Ascending aorta (tissue), 2 donors: ENCODE measurements at regions of chr2 and their contacts with region 1.

Region 1: DNA sequence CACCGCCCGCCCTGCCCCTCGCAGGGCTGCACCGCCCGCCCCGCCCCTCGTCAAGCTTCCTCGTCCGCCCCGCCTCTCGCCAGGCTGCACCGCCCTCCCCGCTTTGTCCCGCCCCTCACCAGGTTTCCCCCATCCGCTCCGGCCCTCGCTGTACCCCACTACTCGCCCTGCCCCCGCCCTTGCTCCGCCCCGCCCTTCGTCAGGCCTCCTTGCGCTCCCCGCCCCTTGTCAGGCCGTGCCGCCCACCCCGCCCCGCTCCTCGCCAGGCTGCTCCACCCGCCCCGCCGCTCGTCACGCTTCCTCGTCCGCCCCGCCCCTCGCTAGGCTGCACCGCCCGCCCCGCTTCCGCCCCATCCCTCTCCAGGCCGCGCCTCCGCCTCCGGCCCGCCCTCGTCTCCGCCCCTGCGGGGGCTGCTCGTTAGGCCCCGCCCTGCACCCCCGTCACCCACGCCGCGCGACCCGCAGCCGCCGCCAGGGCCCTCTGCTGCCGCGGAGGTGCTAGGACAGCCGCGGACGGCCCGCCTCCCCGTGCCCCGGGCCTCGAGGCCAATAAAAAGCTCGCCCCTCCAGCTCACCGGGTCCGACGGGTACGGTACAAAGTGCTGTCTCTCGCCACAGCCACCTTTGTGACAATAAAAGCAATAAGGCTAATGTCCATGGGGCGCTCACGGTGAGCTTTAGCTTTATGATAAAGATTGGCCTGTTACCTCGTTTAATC is 574 bp upstream of the DNPEP start:
- DNase-seq: peak; percentile 90 to 99
- H3K4me3 ChIP-seq: peak overlapping the region; percentile 81 to 82
- H3K27ac ChIP-seq: peak overlapping the region; percentile 67 to 81
- H3K4me1 ChIP-seq: peaks cover 8 to 11% of the 10 kb centered on the region in 2 donors
- H3K27me3 ChIP-seq: no peaks in the 10 kb centered on the region
- CTCF ChIP-seq: peak; percentile 69 to 86 (median 74)

Region 2: DNA sequence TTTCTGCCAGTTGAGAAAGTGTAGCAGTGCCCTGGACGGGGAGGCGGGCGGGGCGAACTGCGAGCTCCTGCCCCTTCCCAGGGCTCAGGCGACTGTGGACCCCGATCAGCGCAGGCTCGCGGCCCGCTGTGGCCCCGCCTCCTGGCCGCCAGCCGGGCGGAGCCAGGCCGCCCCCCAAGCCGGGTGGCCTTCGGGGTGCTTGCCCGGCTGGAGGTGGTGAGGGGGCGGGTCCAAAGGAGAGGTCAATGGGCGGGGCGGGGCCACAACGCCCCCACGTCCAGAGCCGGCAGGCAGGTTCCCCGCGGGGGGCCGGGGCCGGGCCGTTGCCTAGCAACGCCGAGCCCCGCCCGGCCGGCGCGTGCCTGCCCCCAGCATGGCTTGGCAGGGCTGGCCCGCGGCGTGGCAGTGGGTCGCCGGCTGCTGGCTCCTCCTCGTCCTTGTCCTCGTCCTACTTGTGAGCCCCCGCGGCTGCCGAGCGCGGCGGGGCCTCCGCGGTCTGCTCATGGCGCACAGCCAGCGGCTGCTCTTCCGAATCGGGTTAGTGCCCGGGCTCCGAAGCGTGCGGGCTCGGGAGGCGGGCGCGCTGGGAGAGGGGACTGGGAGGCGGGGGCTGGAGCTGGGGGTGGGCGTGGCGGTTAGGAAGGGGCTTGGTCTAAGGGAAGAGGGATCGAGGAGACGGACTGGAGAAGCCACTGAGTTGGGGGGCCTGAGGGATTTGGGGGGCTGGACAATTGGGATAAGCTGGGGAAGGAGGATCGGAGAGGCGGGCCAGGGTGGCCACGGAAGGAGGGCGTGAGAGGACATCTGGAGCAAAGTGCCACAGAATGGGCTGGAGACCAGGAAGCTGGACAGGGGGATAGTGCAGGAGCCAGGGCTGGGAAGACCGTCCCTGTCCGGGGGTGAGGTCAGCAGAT is 1065.1 kb before region 1 on chr2:
- intact Hi-C with region 1: no loop called
- DNase-seq: peak in 1 of 2 donors; percentile 78
- H3K4me3 ChIP-seq: peak overlapping the region; percentile 63 to 74
- H3K27ac ChIP-seq: peak overlapping the region; percentile 66 to 75
- H3K4me1 ChIP-seq: peaks cover 3 to 18% of the 10 kb centered on the region in 2 donors
- H3K27me3 ChIP-seq: no peaks in the 10 kb centered on the region
- CTCF ChIP-seq: no peak

Region 3: DNA sequence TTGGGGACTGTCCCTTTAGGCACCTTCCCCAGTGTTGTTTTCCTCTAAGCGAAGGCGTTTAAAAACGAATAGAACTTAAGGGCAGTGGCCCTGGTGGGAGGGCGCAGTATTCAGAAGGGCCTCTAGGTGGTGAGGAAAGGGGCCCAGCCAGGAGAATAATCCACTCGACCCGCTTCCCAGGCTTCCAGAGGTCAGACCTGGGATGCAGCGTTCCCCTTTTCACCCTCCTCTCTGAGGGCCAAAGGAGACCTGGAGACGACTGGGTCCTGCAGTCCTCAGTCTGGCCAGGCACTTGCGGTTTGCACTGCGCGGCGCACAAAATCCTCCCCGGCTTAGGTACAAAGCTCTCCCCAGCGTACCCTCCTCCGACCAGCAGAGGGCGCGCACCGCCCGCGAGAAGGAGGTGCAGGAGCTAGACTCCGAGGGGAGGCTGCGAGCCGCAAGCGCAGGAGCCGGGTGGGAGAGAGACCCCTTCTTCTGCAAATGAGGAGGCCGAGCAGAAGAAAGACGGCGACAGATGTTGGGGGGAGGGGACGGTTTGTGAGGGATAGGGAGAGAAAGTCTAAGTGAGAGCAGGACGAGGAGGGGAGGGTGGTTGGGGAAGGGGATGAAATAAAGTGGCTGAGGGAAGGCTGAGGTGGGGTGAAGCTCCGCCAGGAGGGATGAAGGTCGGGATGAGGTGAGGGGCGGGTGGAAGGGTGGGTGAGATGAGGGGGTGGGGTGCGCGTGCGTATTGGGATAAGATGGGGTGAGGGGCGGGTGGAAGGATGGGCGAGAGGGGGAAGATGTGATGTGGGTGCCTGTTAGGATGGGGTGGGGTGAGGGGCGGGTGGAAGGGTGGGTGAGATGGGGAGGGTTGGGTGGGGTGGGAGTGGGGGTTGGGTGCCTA is 408.2 kb before region 1 on chr2:
- intact Hi-C with region 1: no loop called
- DNase-seq: peak; percentile 20 to 88
- H3K4me3 ChIP-seq: peak overlapping the region; percentile 30 to 35
- H3K27ac ChIP-seq: no peak overlapping the region
- H3K4me1 ChIP-seq: peaks cover 15 to 37% of the 10 kb centered on the region in 2 donors
- H3K27me3 ChIP-seq: peaks cover 47% of the 10 kb centered on the region
- CTCF ChIP-seq: peak; percentile 75 to 97 (median 97)

Region 4: GRCh38 chr2:219177552-219178376 is 210.5 kb before region 1 on chr2 and contains the start of gene RETREG2:
- intact Hi-C with region 1: loop called (anchors 5 kb)
- DNase-seq: peak; percentile 34 to 93
- H3K4me3 ChIP-seq: peak within 1 kb of the TSS; percentile 91 to 99
- H3K27ac ChIP-seq: peak within 1 kb of the TSS; percentile 97 to 98
- H3K4me1 ChIP-seq: peaks cover 4 to 22% of the 10 kb centered on the region in 2 donors
- H3K27me3 ChIP-seq: no peaks in the 10 kb centered on the region
- CTCF ChIP-seq: peak in 2 of 3 experiments; percentile 11 to 19
- total RNA-seq, gene RETREG2: 83.5 TPM

Region 5: DNA sequence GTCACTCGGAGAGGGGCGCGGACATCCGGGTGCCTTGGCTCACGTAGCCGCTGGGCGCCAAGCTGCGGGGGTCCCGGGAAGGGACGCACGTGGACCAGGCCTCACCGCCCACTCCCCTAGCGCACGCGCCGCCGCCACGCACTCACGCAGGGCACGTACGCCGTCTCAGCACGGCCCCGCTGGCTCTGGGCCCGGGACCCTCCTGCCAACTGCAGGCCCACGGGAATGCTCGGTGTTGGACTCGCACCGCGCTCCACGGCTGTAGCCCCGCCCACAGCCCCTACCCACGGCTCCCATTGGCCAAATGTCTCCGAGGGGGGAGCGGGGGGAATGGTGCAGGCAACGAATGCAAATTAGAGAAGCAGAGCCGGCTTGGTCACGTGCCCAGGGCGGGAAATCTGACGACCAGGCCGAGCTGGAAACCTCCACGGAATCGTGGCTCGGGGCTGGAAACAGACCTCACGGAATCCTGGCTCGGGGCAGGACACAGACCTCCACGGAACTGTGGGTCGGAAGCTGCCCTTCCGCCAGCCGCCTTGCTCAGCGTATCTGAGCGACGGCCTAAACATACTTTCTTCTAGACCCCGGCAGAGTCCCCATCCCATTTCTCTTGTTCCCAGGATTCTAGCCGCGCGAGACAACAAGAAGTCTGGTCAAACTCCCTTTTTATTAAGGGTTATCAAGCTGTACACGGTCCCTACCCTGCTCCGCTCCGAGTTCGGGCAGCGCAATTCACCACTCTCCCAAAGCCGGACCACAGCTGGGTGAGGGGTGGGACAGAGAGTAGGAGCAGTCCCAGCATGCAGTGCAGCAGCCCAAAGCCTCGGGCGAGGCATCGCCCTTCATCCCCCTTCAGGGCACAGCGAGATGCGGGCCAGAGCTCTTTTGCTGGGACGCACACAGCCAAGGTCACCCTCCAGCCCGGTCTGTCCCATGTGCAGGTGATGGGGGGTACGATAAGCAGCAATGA is 169.3 kb before region 1 on chr2 and contains the start of gene ABCB6:
- intact Hi-C with region 1: loop called (anchors 1 kb)
- DNase-seq: peak; percentile 93 to 99
- H3K4me3 ChIP-seq: peak within 1 kb of the TSS; percentile 64 to 68
- H3K27ac ChIP-seq: peak within 1 kb of the TSS; percentile 92 to 95
- H3K4me1 ChIP-seq: peaks cover 12 to 31% of the 10 kb centered on the region in 2 donors
- H3K27me3 ChIP-seq: no peaks in the 10 kb centered on the region
- CTCF ChIP-seq: no peak
- total RNA-seq, gene ABCB6: 17.9 TPM

Region 6: GRCh38 chr2:219278655-219279516 is 109.4 kb before region 1 on chr2 and contains the start of gene DNAJB2:
- intact Hi-C with region 1: loop called (anchors 5 kb)
- DNase-seq: peak; percentile 98 to 99
- H3K4me3 ChIP-seq: peak within 1 kb of the TSS; percentile 87 to 95
- H3K27ac ChIP-seq: peak within 1 kb of the TSS; percentile 99
- H3K4me1 ChIP-seq: peaks cover 11 to 39% of the 10 kb centered on the region in 2 donors
- H3K27me3 ChIP-seq: no peaks in the 10 kb centered on the region
- CTCF ChIP-seq: peak in 1 of 3 experiments; percentile 7
- total RNA-seq, gene DNAJB2: 51.0 TPM

Region 7: GRCh38 chr2:219498280-219499057 is 110.2 kb after region 1 on chr2 and contains the start of gene GMPPA:
- intact Hi-C with region 1: loop called (anchors 1 kb)
- DNase-seq: peak; percentile 95 to 99
- H3K4me3 ChIP-seq: peak within 1 kb of the TSS; percentile 68 to 85
- H3K27ac ChIP-seq: peak within 1 kb of the TSS; percentile 91 to 99
- H3K4me1 ChIP-seq: peaks cover 13 to 26% of the 10 kb centered on the region in 2 donors
- H3K27me3 ChIP-seq: no peaks in the 10 kb centered on the region
- CTCF ChIP-seq: peak in 1 of 3 experiments; percentile 27
- total RNA-seq, gene GMPPA: 11.4 TPM

Region 8: GRCh38 chr2:219597552-219598307 is 209.4 kb after region 1 on chr2 and contains the start of gene STK11IP:
- intact Hi-C with region 1: loop called (anchors 5 kb)
- DNase-seq: peak; percentile 86 to 99
- H3K4me3 ChIP-seq: peak within 1 kb of the TSS; percentile 70 to 73
- H3K27ac ChIP-seq: peak within 1 kb of the TSS; percentile 88
- H3K4me1 ChIP-seq: peaks cover 0 to 9% of the 10 kb centered on the region in 2 donors
- H3K27me3 ChIP-seq: no peaks in the 10 kb centered on the region
- CTCF ChIP-seq: no peak
- total RNA-seq, gene STK11IP: 138 TPM